H1 (cell line): ENCODE measurements at regions of chr17 and their contacts with region 1.

Region 1: GRCh38 chr17:48555258-48556228 is 10.6 kb upstream of the HOXB2 start:
- DNase-seq: no peak
- H3K4me3 ChIP-seq: no peak overlapping the region
- H3K27ac ChIP-seq: no peak overlapping the region
- H3K4me1 ChIP-seq: peaks cover 0 to 11% (median 9%) of the 10 kb centered on the region in 4 experiments; a peak in 5 of 7 replicates
- H3K27me3 ChIP-seq: peaks cover 98 to 100% (median 99%) of the 10 kb centered on the region in 4 experiments
- CTCF ChIP-seq: no peak
- EP300 ChIP-seq: no peak
- POLR2A ChIP-seq: no peak
- RAD21 ChIP-seq: no peak

Region 2: DNA sequence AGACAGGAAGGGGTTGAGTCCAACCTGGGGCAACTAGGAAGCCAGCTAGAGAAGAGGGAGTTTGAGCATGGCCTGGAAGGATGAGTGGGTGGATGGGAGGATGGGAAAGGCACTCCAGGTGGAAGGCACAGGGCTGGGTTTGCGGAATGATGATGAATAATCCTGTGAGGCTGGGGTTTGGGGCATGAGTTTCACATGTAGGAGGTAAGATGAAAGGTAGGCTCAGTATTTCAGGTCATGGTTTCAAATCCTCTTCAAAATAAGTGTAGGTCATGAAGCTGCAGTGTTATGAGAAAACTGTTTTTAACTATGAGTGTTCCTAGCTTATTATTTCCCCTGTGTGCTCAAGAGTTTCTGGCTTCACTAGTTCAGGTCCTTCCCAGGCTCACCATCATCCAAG is 255.8 kb before region 1 on chr17:
- CTCF ChIA-PET with region 1: no interaction called
- POLR2A ChIA-PET with region 1: no interaction called
- DNase-seq: no peak
- H3K4me3 ChIP-seq: no peak overlapping the region
- H3K27ac ChIP-seq: no peak overlapping the region
- H3K4me1 ChIP-seq: no peaks in the 10 kb centered on the region
- H3K27me3 ChIP-seq: no peaks in the 10 kb centered on the region
- CTCF ChIP-seq: no peak
- EP300 ChIP-seq: no peak
- POLR2A ChIP-seq: no peak
- RAD21 ChIP-seq: no peak

Region 3: GRCh38 chr17:48457080-48457836 is 98.3 kb before region 1 on chr17:
- CTCF ChIA-PET with region 1: no interaction called
- POLR2A ChIA-PET with region 1: no interaction called
- DNase-seq: peak in 1 of 2 experiments; percentile 85
- H3K4me3 ChIP-seq: peak overlapping the region in 3 of 4 experiments; percentile 31 to 52 (median 51); a peak in 6 of 8 replicates
- H3K27ac ChIP-seq: no peak overlapping the region
- H3K4me1 ChIP-seq: peaks cover 0 to 12% (median 4%) of the 10 kb centered on the region in 4 experiments; a peak in 5 of 7 replicates
- H3K27me3 ChIP-seq: peaks cover 4 to 12% (median 9%) of the 10 kb centered on the region in 4 experiments
- CTCF ChIP-seq: peak; percentile 85 to 97 (median 96)
- EP300 ChIP-seq: no peak
- POLR2A ChIP-seq: no peak
- RAD21 ChIP-seq: peak; percentile 52 to 75

Region 4: DNA sequence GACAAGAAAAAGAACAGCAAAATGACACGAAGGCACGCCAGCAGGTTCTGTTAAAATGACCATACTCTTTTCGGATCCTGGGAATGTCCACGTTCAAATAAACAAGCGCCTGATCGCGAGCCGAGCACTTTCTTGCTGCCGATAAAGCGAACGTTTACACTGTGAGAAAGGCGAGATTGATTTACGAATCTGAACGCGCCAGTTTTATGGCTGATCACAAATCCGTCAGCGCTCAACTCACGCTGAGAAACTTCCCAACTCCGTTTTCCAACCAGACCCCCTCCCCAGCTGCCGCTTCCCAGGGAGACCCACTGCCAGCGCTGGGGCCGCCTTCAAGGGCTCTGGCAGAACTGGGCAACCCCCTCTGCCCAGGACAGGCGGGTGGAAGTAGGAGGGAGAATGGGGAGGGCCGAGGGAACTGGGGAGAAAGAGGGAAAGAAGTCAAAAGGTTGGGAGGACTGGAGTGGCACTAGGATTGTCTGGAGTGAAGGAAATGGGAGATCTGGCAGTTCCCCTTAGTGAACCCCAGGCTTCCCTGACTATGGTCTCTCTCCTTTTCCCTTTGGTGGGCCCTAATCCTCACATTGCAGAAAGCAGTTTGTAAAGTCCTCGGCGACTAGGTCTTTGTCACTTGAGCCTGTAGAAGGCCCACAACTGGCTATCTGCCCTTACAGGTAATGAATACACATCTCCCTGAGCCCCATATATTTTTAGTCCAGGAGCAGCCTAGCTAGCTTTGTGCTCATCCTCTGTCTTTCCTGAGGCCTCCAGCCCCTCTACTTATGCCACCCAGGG is 15.7 kb after region 1 on chr17:
- CTCF ChIA-PET with region 1: interaction called, 18 read pairs
- POLR2A ChIA-PET with region 1: interaction called, 8 read pairs
- DNase-seq: no peak
- H3K4me3 ChIP-seq: no peak overlapping the region
- H3K27ac ChIP-seq: no peak overlapping the region
- H3K4me1 ChIP-seq: peaks cover 0 to 5% (median 3%) of the 10 kb centered on the region in 4 experiments; a peak in 4 of 7 replicates
- H3K27me3 ChIP-seq: peaks cover 99 to 100% (median 100%) of the 10 kb centered on the region in 4 experiments
- CTCF ChIP-seq: no peak
- EP300 ChIP-seq: no peak
- POLR2A ChIP-seq: no peak
- RAD21 ChIP-seq: no peak